ENCODE measurements at regions of chr1 and their contacts with region 1.

Region 1: DNA sequence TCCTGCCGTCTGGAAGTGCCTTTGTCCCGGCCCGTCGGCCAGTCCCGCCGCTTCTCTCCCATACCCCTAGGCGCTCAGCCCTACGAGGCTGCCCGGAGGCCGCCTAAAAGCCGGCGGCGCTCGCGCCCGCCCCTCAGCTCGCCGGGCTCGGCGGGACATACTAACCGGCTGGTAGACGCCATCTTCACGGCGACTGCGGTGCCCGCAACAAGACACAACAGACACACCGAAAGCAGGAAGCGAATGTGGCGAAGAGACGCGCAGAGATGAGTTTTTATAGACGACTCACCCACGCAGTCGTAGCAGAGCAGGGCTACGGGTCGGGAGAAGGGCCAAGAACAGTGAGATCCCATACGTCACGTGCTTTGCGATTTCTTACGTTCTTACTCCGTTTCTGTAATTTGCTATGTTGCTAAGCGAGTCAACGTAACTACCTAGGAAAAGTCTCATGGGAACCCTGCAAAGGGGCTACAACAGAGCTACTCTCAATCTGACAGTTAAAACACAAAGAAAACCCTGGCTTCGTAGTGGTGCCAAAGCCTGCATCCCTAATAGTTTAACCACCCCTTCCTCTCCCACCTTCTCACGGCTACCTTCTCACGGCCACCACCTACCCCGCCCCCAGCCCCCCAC is at the start of gene GTF2B:
- DNase-seq: peak; percentile 82 to 98 (median 88)

Region 2: GRCh38 chr1:88462488-88463261 is 428.8 kb before region 1 on chr1:
- intact Hi-C with region 1: loop called (anchors 10 kb)
- DNase-seq: peak; percentile 55 to 96 (median 69)

Region 3: GRCh38 chr1:88683541-88684481 is 207.6 kb before region 1 on chr1 and contains the start of gene PKN2:
- intact Hi-C with region 1: loop called (anchors 5 kb)
- DNase-seq: peak; percentile 90 to 99 (median 92)

Region 4: DNA sequence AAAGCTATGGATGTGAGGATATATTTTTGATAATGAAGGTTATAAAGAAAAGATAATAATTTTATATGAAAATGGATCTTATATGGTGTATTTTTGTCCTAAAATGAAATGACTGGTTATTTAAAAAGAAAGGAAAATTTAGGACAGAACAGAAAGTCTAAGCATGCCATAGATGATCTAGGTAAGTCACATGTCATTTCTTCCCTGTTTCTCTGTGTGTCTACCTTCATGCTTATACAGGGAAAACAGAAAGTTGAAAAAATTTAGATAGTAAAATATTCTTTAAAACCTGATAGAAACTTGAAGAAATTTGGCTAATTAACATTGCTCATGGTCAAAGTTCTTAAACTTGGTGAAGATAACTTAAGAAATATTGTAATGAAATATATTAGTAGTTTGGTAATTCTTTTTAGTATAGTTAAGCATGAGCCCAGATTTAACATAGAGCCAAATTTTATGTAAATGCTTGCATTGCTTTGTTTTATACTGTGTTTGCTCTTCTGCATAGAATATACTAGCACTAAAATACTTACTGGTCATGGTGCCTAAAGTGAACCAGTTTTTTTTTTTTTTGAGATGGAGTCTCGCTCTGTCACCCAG is 319.7 kb after region 1 on chr1:
- intact Hi-C with region 1: no loop called
- DNase-seq: no peak

Measured in posterior cingulate gyrus (tissue), 11 donors.